OCI-LY7 (cell line): ENCODE measurements at regions of chr3 and their contacts with region 1.

Region 1: GRCh38 chr3:112642912-112643506 is 2.1 kb upstream of the CCDC80 start:
- DNase-seq: peak; percentile 83
- H3K4me3 ChIP-seq: peak overlapping the region; percentile 33
- H3K27ac ChIP-seq: no peak overlapping the region
- H3K4me1 ChIP-seq: peaks cover 6% of the 10 kb centered on the region
- CTCF ChIP-seq: peak; percentile 94

Region 2: DNA sequence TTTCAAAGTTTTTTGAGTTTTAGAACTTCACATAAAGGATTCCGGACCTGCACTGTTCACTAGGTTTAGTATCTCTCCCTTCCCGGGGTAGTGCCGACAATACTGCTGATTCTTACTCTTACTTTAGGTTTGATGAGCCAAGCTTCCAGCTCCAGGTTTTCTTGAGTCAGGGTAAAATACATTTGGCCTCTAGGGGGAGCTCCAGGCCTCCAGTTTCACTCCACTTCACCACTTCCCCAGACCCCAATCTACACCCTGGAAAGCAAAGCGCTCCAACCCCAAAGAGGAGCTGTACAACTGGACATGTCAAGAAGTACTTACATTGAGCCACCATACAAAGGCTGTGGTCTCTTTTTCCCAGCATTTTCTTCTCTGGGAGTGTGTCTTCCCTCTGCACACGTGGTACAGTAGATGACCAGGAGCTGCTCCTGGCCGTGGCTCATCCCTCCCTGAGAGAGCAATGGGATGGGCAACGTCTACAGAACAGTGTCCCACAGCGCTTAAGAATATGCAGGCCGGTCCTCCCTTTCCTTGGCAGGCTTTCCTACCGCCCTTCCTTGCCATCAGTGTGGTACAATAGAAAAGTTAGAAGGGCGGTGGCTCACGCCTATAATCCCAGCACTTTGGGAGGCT is 91.8 kb after region 1 on chr3:
- CTCF ChIA-PET with region 1: interaction called, 3 read pairs
- POLR2A ChIA-PET with region 1: interaction called, 3 read pairs
- intact Hi-C with region 1: loop called (anchors 2 kb)
- DNase-seq: peak; percentile 73
- H3K4me3 ChIP-seq: no peak overlapping the region
- H3K27ac ChIP-seq: no peak overlapping the region
- H3K4me1 ChIP-seq: no peaks in the 10 kb centered on the region
- CTCF ChIP-seq: peak; percentile 92

Region 3: DNA sequence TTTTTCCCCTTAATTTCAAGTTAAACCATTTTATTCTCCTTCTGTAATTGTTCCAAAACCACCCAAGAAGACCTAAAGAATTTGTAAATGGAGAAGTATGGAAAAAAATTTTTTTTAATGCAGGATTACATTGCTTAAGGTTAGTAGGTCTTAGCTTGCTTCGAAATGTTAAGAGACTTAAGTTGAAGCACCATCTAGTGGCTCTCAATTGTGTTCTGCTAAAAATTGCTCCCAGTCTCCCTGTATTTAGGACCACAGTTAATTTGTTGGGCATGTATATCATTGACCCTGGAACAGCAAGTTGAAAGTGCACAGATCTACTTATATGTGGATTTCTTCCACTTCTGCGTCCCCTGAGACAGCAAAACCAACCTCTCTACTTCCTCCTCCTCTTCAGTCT is 171.3 kb after region 1 on chr3:
- CTCF ChIA-PET with region 1: no interaction called
- POLR2A ChIA-PET with region 1: no interaction called
- intact Hi-C with region 1: loop called (anchors 5 kb)
- DNase-seq: peak; percentile 28
- H3K4me3 ChIP-seq: peak overlapping the region; percentile 17
- H3K27ac ChIP-seq: peak overlapping the region; percentile 45
- H3K4me1 ChIP-seq: peaks cover 21% of the 10 kb centered on the region
- CTCF ChIP-seq: peak; percentile 71